ENCODE measurements at regions of chr6 and their contacts with region 1.

Region 1: DNA sequence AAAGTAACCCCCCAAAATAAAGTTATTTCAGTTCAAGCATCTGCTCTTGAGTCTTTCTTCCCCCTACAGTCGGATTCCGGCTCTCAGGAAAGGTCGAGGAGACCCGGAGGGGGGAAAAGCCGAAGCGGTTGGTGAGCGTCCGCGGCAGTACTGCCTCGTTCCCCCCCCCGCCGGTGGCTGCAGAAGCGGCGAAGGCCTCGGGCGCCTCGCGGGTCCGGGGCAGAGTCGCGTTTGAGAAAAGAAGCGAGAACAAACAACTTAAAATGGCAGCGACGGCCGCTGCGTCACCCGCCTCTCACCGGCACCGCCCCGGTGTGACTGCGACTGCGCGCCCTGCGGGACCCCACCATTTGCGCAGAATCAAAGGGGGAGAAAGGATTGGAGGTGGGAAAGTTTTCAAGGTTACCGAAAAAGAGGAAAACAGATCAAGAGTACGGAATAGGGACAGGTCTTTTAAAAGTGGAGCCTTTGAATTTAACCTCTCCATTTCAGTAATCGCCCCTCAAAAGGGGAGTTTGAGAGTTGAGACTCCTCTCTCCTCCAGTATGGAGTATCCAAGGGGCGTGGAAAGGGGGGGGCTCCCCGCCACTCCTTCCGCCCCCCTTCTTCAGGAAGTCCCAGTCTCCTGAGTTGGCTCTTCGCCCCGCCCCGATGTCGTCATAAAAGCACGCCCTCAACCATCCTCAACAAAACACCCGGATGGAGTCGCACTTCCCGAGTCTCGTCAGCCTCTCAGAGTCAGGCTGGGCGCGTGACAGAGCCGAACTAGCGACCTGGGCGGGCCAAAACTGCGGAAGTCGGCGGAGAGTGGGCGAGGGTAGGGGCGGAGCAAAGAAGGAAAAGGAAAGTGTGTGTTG is 1.9 kb upstream of the C6orf62 start:
- DNase-seq: peak; percentile 100
- H3K4me3 ChIP-seq: peak overlapping the region; percentile 43 to 99 (median 85)
- H3K27ac ChIP-seq: peak overlapping the region; percentile 96 to 99 (median 98)
- H3K4me1 ChIP-seq: peaks cover 16 to 25% of the 10 kb centered on the region in 2 donors
- H3K27me3 ChIP-seq: no peaks in the 10 kb centered on the region
- CTCF ChIP-seq: peak in 1 of 6 experiments; percentile 16
- POLR2A ChIP-seq: peak; percentile 97

Region 2: DNA sequence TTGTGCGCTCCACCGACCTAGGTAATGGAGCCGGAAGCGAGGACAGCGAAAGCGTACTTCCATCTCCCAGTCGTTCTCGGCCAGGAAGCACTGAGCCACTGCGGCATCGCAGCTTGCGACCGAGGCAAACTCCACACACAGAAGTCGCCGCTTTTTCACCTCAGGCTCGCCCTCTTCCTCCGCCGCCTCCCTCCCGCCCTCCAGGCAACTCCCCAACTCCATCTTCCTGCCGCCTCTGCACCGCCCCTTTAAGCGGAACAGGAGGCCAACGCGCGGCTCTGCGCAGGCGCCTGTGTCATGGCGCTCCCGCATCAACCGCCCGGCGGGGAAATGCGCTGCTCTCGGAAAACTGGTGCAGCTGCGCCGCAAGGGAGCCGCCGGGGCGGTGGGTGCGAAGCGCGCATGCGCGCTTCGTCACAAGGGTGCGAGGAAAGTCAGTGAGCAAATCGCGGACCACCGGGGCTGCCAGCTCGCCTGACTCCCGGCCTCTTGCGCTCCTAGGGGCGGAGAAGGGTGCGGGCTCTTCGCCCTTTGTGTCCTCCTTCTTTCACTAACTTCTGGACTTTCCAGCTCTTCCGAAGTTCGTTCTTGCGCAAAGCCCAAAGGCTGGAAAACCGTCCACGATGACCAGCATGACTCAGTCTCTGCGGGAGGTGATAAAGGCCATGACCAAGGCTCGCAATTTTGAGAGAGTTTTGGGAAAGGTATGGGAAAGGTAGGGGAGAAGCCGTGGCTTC is 54.0 kb before region 1 on chr6 and contains the starts of genes ACOT13 and TDP2:
- intact Hi-C with region 1: loop called (anchors 5 kb)
- DNase-seq: peak; percentile 95 to 96
- H3K4me3 ChIP-seq: peak within 1 kb of the TSS; percentile 64 to 82 (median 80)
- H3K27ac ChIP-seq: peak within 1 kb of the TSS; percentile 74 to 86 (median 83)
- H3K4me1 ChIP-seq: peaks cover 14 to 22% of the 10 kb centered on the region in 2 donors
- H3K27me3 ChIP-seq: no peaks in the 10 kb centered on the region
- CTCF ChIP-seq: peak in 5 of 6 experiments; percentile 30 to 57 (median 49)
- POLR2A ChIP-seq: peak in 1 of 2 donors; percentile 84
- total RNA-seq, gene ACOT13: 5.5 to 13.3 (median 8.6) TPM
- total RNA-seq, gene TDP2: 16.8 to 45.6 (median 28.1) TPM

Region 3: GRCh38 chr6:24683297-24684296 is 37.2 kb before region 1 on chr6:
- intact Hi-C with region 1: no loop called
- DNase-seq: no peak
- H3K4me3 ChIP-seq: no peak overlapping the region
- H3K27ac ChIP-seq: no peak overlapping the region
- H3K4me1 ChIP-seq: no peaks in the 10 kb centered on the region
- H3K27me3 ChIP-seq: no peaks in the 10 kb centered on the region
- CTCF ChIP-seq: no peak
- POLR2A ChIP-seq: no peak

Region 4: DNA sequence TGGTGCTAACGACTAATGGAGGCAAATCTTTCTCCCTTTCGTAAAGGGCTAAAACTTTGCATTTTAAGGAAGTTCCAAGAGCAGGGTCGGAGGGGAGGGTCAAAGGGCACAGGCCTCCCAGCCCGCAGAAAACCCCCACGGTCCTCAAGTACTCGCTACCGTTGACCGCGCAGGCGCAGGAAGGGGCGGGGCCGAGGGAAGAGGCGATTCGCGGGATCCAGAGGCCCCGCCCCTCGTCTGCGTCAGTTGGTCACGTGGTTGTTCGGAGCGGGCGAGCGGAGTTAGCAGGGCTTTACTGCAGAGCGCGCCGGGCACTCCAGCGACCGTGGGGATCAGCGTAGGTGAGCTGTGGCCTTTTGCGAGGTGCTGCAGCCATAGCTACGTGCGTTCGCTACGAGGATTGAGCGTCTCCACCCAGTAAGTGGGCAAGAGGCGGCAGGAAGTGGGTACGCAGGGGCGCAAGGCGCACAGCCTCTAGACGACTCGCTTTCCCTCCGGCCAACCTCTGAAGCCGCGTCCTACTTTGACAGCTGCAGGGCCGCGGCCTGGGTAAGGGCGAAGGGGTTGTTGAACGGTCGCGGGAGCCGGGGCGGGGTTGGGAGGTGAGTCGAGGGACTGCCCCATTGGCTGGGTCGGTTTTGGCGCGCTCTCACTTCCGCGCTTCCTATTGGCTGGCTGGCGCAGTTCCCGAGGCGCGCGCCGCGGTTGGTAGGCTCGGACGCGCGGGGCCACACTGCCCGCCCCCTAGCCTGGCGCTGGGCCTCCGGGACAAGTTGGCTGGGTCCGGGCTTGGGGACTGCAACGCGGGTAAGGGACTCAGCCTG is 54.1 kb after region 1 on chr6 and contains the start of gene GMNN:
- intact Hi-C with region 1: loop called (anchors 5 kb)
- DNase-seq: peak; percentile 98 to 99
- H3K4me3 ChIP-seq: peak within 1 kb of the TSS; percentile 60 to 91 (median 78)
- H3K27ac ChIP-seq: peak within 1 kb of the TSS; percentile 55 to 97 (median 96)
- H3K4me1 ChIP-seq: peaks cover 7 to 9% of the 10 kb centered on the region in 2 donors
- H3K27me3 ChIP-seq: no peaks in the 10 kb centered on the region
- CTCF ChIP-seq: no peak
- POLR2A ChIP-seq: peak in 1 of 2 donors; percentile 82
- total RNA-seq, gene GMNN: 9.4 to 25.8 (median 14.5) TPM

Region 5: DNA sequence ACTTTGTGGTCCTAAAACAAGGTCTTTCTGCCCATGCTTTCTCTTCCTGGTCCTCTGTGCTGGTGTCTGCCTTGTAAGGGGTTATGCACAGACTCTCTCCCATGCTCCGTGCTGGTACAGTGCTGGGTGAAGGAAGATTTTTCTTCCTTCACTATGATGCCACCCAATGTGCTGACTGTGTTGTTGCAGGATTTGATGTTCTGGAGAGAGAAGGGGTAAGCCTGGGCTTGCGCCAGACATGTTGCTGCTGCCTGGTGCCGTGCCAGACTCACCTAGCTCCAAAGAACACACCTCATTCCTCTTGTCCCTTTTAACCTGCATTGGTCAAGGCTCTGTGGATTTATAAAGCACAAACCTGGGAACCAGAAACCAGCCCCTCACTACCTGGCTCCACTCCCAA is 106.3 kb after region 1 on chr6:
- intact Hi-C with region 1: no loop called
- DNase-seq: peak; percentile 93 to 96
- H3K4me3 ChIP-seq: no peak overlapping the region
- H3K27ac ChIP-seq: peak overlapping the region in 2 of 3 donors; percentile 54 to 61
- H3K4me1 ChIP-seq: peaks cover 15 to 23% of the 10 kb centered on the region in 2 donors
- H3K27me3 ChIP-seq: no peaks in the 10 kb centered on the region
- CTCF ChIP-seq: peak in 2 of 6 experiments; percentile 31 to 42
- POLR2A ChIP-seq: peak in 1 of 2 donors; percentile 27